GM10248 (cell line): ENCODE measurements at regions of chr22 and their contacts with region 1.

Region 1: GRCh38 chr22:50556703-50557102 is 6.0 kb downstream of the SYCE3 start:
- DNase-seq: no peak
- CTCF ChIP-seq: no peak

Region 2: GRCh38 chr22:50544078-50544745 is 12.5 kb before region 1 on chr22:
- CTCF ChIA-PET with region 1: interaction called, 11 read pairs
- POLR2A ChIA-PET with region 1: no interaction called
- DNase-seq: peak; percentile 78
- CTCF ChIP-seq: peak; percentile 73

Region 3: GRCh38 chr22:50599786-50600455 is 43.2 kb after region 1 on chr22:
- CTCF ChIA-PET with region 1: no interaction called
- POLR2A ChIA-PET with region 1: no interaction called
- DNase-seq: peak; percentile 85
- CTCF ChIP-seq: no peak